K562 (cell line): ENCODE measurements at regions of chr1 and their contacts with region 1.

Region 1: GRCh38 chr1:23403735-23404486 is 20.6 kb downstream of the TCEA3 start:
- DNase-seq: peak; percentile 87 to 92 (median 88)
- ATAC-seq: peak; percentile 93
- H3K4me3 ChIP-seq: peak overlapping the region; percentile 9; the same call in 1 of the 2 replicates
- H3K27ac ChIP-seq: peak overlapping the region; percentile 33; the same call in 2 of the 3 replicates
- H3K4me1 ChIP-seq: peaks cover 5 to 18% of the 10 kb centered on the region in 2 experiments
- H3K27me3 ChIP-seq: no peaks in the 10 kb centered on the region
- CTCF ChIP-seq: peak; percentile 93 to 98 (median 98)
- EP300 ChIP-seq: peak; percentile 64
- POLR2A ChIP-seq: no peak
- RAD21 ChIP-seq: peak; percentile 94 to 98

Region 2: GRCh38 chr1:23081376-23081775 is 322.5 kb before region 1 on chr1:
- CTCF ChIA-PET with region 1: no interaction called
- POLR2A ChIA-PET with region 1: no interaction called
- in situ Hi-C with region 1: no loop called
- intact Hi-C with region 1: loop called (anchors 10 kb)
- DNase-seq: no peak
- ATAC-seq: peak; percentile 64
- H3K4me3 ChIP-seq: no peak overlapping the region
- H3K27ac ChIP-seq: no peak overlapping the region
- H3K4me1 ChIP-seq: no peaks in the 10 kb centered on the region
- H3K27me3 ChIP-seq: no peaks in the 10 kb centered on the region
- CTCF ChIP-seq: peak; percentile 33 to 44 (median 36); a peak in 4 of 6 replicates
- EP300 ChIP-seq: no peak
- POLR2A ChIP-seq: no peak; the same call in 1 of the 2 replicates
- RAD21 ChIP-seq: 0 out of 4 replicates have a peak, but pooled peaks of 1 of the 2 experiments have one; percentile 28

Region 3: GRCh38 chr1:23216771-23217420 is 187.0 kb before region 1 on chr1:
- CTCF ChIA-PET with region 1: no interaction called
- POLR2A ChIA-PET with region 1: interaction called, 5 read pairs
- in situ Hi-C with region 1: no loop called
- intact Hi-C with region 1: loop called (anchors 5 kb)
- DNase-seq: peak; percentile 41 to 88 (median 80)
- ATAC-seq: peak; percentile 86
- H3K4me3 ChIP-seq: peak overlapping the region; percentile 42
- H3K27ac ChIP-seq: no peak overlapping the region
- H3K4me1 ChIP-seq: peaks cover 0 to 13% of the 10 kb centered on the region in 2 experiments; a peak in 4 of 5 replicates
- H3K27me3 ChIP-seq: peaks cover 34 to 60% of the 10 kb centered on the region in 2 experiments
- CTCF ChIP-seq: peak; percentile 76 to 87 (median 77)
- EP300 ChIP-seq: no peak
- POLR2A ChIP-seq: no peak
- RAD21 ChIP-seq: peak; percentile 75 to 89

Region 4: GRCh38 chr1:23282957-23283356 is 121.0 kb before region 1 on chr1:
- CTCF ChIA-PET with region 1: interaction called, 3 read pairs
- POLR2A ChIA-PET with region 1: no interaction called
- in situ Hi-C with region 1: no loop called
- intact Hi-C with region 1: loop called (anchors 10 kb)
- DNase-seq: no peak
- ATAC-seq: no peak
- H3K4me3 ChIP-seq: no peak overlapping the region
- H3K27ac ChIP-seq: no peak overlapping the region
- H3K4me1 ChIP-seq: no peaks in the 10 kb centered on the region
- H3K27me3 ChIP-seq: no peaks in the 10 kb centered on the region
- CTCF ChIP-seq: no peak
- EP300 ChIP-seq: no peak
- POLR2A ChIP-seq: no peak
- RAD21 ChIP-seq: no peak

Region 5: GRCh38 chr1:23322770-23323169 is 81.1 kb before region 1 on chr1:
- CTCF ChIA-PET with region 1: no interaction called
- POLR2A ChIA-PET with region 1: no interaction called
- in situ Hi-C with region 1: no loop called
- intact Hi-C with region 1: loop called (anchors 5 kb)
- DNase-seq: no peak
- ATAC-seq: no peak
- H3K4me3 ChIP-seq: no peak overlapping the region
- H3K27ac ChIP-seq: no peak overlapping the region
- H3K4me1 ChIP-seq: no peaks in the 10 kb centered on the region
- H3K27me3 ChIP-seq: no peaks in the 10 kb centered on the region
- CTCF ChIP-seq: no peak
- EP300 ChIP-seq: no peak
- POLR2A ChIP-seq: no peak
- RAD21 ChIP-seq: no peak

Region 6: DNA sequence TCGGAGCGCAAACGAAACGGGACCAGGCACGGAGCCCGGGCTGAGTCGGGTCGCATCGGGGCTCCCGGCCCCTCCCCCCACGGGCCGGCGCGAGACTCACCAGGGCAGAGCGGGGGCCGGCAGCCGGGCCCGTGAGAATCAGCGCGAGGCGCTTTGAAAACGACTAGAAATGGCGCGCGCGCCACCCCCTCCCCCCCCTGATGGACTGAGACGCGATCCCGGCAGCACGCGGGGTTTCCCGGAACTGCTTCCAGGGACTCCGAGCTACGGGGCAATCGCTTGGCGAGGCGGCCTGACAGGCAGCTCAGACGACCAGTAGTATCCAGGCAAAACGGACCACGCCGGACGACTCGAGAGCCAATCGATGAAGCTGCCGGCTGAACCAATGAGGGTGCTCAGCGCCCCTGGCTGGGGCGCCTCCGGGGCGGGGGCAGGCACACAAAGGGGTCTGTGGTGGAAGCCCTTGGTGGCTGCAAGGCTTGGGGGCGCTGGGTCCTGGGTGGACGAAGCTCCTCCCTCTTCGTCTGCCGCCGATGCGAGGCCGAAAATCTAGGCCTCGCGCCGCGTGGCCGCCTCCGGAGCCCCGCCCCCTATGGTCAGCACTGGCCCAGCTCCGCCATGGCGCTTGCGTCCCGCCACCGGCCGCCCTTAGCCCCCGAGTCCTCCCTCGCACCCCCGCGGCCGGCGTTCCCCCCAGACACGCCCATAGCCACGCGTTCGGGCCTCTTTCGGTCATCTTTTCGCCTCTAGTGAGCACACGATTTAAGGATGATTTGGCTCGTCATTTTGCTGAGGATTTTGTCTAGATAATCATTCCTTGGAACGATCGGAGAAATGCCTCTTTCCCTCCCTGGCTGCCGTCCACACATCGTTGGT is 59.6 kb before region 1 on chr1 and contains the start of gene HNRNPR:
- CTCF ChIA-PET with region 1: interaction called, 6 read pairs
- POLR2A ChIA-PET with region 1: interaction called, 5 read pairs
- in situ Hi-C with region 1: loop called (anchors 5 kb)
- intact Hi-C with region 1: loop called (anchors 1 kb)
- DNase-seq: peak; percentile 99 to 100 (median 100)
- ATAC-seq: peak; percentile 93
- H3K4me3 ChIP-seq: peak within 1 kb of the TSS; percentile 76
- H3K27ac ChIP-seq: peak within 1 kb of the TSS; percentile 99
- H3K4me1 ChIP-seq: peaks cover 15 to 26% of the 10 kb centered on the region in 2 experiments; a peak in 4 of 5 replicates
- H3K27me3 ChIP-seq: no peaks in the 10 kb centered on the region
- CTCF ChIP-seq: 0 out of 6 replicates have a peak, but pooled peaks of 1 of the 3 experiments have one; percentile 9
- EP300 ChIP-seq: no peak; the same call in 1 of the 2 replicates
- POLR2A ChIP-seq: peak; percentile 92
- RAD21 ChIP-seq: no peak; a peak in 1 of 4 replicates
- polyA plus RNA-seq, gene HNRNPR: 80.9 to 93.4 TPM

Region 7: GRCh38 chr1:23367791-23368561 is 35.9 kb before region 1 on chr1:
- CTCF ChIA-PET with region 1: interaction called, 4 read pairs
- POLR2A ChIA-PET with region 1: interaction called, 4 read pairs
- in situ Hi-C with region 1: no loop called
- intact Hi-C with region 1: loop called (anchors 1 kb)
- DNase-seq: peak; percentile 99 to 100 (median 100)
- ATAC-seq: peak; percentile 91
- H3K4me3 ChIP-seq: peak overlapping the region; percentile 58
- H3K27ac ChIP-seq: peak overlapping the region; percentile 97
- H3K4me1 ChIP-seq: peaks cover 23 to 36% of the 10 kb centered on the region in 2 experiments
- H3K27me3 ChIP-seq: no peaks in the 10 kb centered on the region
- CTCF ChIP-seq: peak in 1 of 3 experiments; percentile 27; a peak in 2 of 6 replicates
- EP300 ChIP-seq: no peak; the same call in 1 of the 2 replicates
- POLR2A ChIP-seq: peak; percentile 83
- RAD21 ChIP-seq: no peak